ENCODE measurements at regions of chr18 and their contacts with region 1.

Region 1: DNA sequence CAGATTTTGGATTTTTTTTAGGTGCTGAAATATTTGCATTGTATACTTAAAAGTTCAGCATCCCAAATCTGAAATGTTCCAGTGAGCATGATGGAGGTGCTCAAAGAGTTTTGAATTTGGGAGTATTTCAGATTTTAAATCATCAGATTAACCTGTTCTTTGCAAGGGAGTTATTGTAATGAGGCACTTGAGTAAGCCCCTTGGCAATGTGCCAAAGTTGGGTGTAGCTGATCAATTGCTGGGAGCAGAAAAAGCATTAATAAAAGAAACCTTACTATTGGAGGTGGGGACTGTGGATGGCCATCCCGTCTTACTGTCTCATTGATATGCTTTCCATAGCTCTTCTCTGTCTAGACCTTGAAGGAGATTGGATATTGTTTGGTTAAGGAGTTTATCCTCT is 28.3 kb downstream of the MALT1 start:
- DNase-seq: no peak
- H3K4me3 Mint-ChIP-seq: no peak overlapping the region
- H3K27ac Mint-ChIP-seq: no peak overlapping the region
- H3K4me1 Mint-ChIP-seq: peaks cover 50% of the 10 kb centered on the region
- H3K27me3 Mint-ChIP-seq: no peaks in the 10 kb centered on the region

Region 2: GRCh38 chr18:58535340-58536201 is 164.0 kb before region 1 on chr18:
- CTCF ChIA-PET with region 1: no interaction called
- intact Hi-C with region 1: loop called (anchors 1 kb)
- DNase-seq: peak; percentile 75
- H3K4me3 Mint-ChIP-seq: no peak overlapping the region
- H3K27ac Mint-ChIP-seq: peak overlapping the region; percentile 21
- H3K4me1 Mint-ChIP-seq: peaks cover 46% of the 10 kb centered on the region
- H3K27me3 Mint-ChIP-seq: no peaks in the 10 kb centered on the region

Region 3: GRCh38 chr18:58605027-58606020 is 94.2 kb before region 1 on chr18:
- CTCF ChIA-PET with region 1: no interaction called
- intact Hi-C with region 1: loop called (anchors 1 kb)
- DNase-seq: peak; percentile 84
- H3K4me3 Mint-ChIP-seq: no peak overlapping the region
- H3K27ac Mint-ChIP-seq: no peak overlapping the region
- H3K4me1 Mint-ChIP-seq: peaks cover 60% of the 10 kb centered on the region
- H3K27me3 Mint-ChIP-seq: no peaks in the 10 kb centered on the region

Region 4: DNA sequence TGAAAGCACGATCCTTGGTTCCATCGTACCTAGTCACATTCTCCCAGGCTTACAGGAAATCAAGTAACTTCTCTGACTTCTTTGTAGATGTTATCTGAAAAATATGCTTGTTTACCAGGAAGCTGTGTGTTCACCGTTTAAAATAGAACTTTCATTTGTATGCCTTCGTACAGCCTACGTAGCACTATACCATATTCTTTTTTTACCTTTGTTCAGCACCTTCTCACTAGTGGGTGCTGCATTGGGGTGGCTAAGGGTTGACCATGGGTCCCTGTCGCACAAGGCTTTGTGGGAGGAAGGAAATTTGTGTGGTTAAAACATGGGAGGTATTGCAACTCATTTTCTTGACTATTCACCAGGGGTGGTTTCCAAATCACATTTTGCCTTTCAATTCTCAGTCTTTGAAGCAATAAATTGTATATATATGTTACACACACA is 11.7 kb before region 1 on chr18:
- CTCF ChIA-PET with region 1: interaction called, 3 read pairs
- intact Hi-C with region 1: loop called (anchors 1 kb)
- DNase-seq: peak; percentile 64
- H3K4me3 Mint-ChIP-seq: peak overlapping the region; percentile 70
- H3K27ac Mint-ChIP-seq: peak overlapping the region; percentile 87
- H3K4me1 Mint-ChIP-seq: peaks cover 78% of the 10 kb centered on the region
- H3K27me3 Mint-ChIP-seq: no peaks in the 10 kb centered on the region

Region 5: GRCh38 chr18:58716060-58716756 is 16.7 kb after region 1 on chr18:
- CTCF ChIA-PET with region 1: no interaction called
- intact Hi-C with region 1: loop called (anchors 1 kb)
- DNase-seq: no peak
- H3K4me3 Mint-ChIP-seq: no peak overlapping the region
- H3K27ac Mint-ChIP-seq: peak overlapping the region; percentile 43
- H3K4me1 Mint-ChIP-seq: peaks cover 54% of the 10 kb centered on the region
- H3K27me3 Mint-ChIP-seq: no peaks in the 10 kb centered on the region

Region 6: DNA sequence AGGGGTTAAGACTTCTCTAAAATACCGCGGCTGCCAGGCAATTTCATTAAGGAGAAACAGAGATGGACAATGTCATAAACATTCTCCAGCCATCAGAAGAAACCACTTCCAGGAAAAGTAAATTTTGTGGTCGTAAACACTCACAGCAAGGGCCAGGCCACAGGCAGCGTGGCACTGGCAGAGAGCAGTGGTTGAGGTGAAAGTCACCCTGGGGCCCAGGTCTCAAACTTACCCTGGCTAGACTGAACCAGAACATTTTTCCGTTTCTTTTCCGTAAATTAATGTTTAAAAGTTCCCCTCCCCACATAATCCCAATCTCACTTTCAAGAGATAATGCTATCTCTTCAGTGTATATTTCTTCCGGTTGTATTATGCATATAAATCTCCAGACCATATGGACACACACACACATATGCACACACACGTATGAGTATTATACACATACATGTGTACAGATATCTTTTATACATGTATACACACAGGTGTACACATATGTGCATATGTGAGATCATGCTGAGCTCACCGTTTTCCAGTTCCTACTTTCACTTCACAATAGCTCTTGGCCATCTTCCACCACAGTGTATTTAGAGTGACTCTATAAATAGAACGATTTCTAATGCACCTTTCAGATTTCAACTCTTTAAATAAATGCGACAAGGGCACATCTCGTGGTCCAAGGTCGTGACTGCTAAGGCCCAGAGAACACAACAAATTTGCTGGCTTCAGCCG is 61.9 kb after region 1 on chr18:
- CTCF ChIA-PET with region 1: interaction called, 34 read pairs
- intact Hi-C with region 1: loop called (anchors 5 kb)
- DNase-seq: no peak
- H3K4me3 Mint-ChIP-seq: no peak overlapping the region
- H3K27ac Mint-ChIP-seq: no peak overlapping the region
- H3K4me1 Mint-ChIP-seq: peaks cover 22% of the 10 kb centered on the region
- H3K27me3 Mint-ChIP-seq: peaks cover 18% of the 10 kb centered on the region

Region 7: GRCh38 chr18:59358712-59359575 is 659.4 kb after region 1 on chr18 and contains the start of gene LMAN1:
- CTCF ChIA-PET with region 1: no interaction called
- intact Hi-C with region 1: loop called (anchors 5 kb)
- DNase-seq: peak; percentile 96
- H3K4me3 Mint-ChIP-seq: peak within 1 kb of the TSS; percentile 98
- H3K27ac Mint-ChIP-seq: peak within 1 kb of the TSS; percentile 98
- H3K4me1 Mint-ChIP-seq: peaks cover 36% of the 10 kb centered on the region
- H3K27me3 Mint-ChIP-seq: no peaks in the 10 kb centered on the region
- total RNA-seq, gene LMAN1: 146 to 151 TPM